Caco-2 (cell line): ENCODE measurements at regions of chr15 and their contacts with region 1.

Region 1: GRCh38 chr15:32743411-32744140 is 25.8 kb downstream of the GREM1 start:
- DNase-seq: no peak
- H3K4me3 ChIP-seq: no peak overlapping the region
- H3K4me3 Mint-ChIP-seq: no peak overlapping the region
- H3K27ac Mint-ChIP-seq: no peak overlapping the region
- H3K4me1 ChIP-seq: no peaks in the 10 kb centered on the region
- H3K4me1 Mint-ChIP-seq: no peaks in the 10 kb centered on the region
- H3K27me3 ChIP-seq: no peaks in the 10 kb centered on the region
- H3K27me3 Mint-ChIP-seq: peaks cover 3% of the 10 kb centered on the region
- CTCF ChIP-seq: no peak

Region 2: GRCh38 chr15:32730677-32731654 is 12.6 kb before region 1 on chr15:
- CTCF ChIA-PET with region 1: no interaction called
- POLR2A ChIA-PET with region 1: no interaction called
- intact Hi-C with region 1: no loop called
- DNase-seq: no peak
- H3K4me3 ChIP-seq: no peak overlapping the region
- H3K4me3 Mint-ChIP-seq: no peak overlapping the region
- H3K27ac Mint-ChIP-seq: no peak overlapping the region
- H3K4me1 ChIP-seq: no peaks in the 10 kb centered on the region
- H3K4me1 Mint-ChIP-seq: no peaks in the 10 kb centered on the region
- H3K27me3 ChIP-seq: no peaks in the 10 kb centered on the region
- H3K27me3 Mint-ChIP-seq: peaks cover 7% of the 10 kb centered on the region
- CTCF ChIP-seq: no peak

Region 3: GRCh38 chr15:32802286-32802936 is 58.8 kb after region 1 on chr15:
- CTCF ChIA-PET with region 1: no interaction called
- POLR2A ChIA-PET with region 1: no interaction called
- intact Hi-C with region 1: loop called (anchors 10 kb)
- DNase-seq: no peak
- H3K4me3 ChIP-seq: no peak overlapping the region
- H3K4me3 Mint-ChIP-seq: no peak overlapping the region
- H3K27ac Mint-ChIP-seq: no peak overlapping the region
- H3K4me1 ChIP-seq: no peaks in the 10 kb centered on the region
- H3K4me1 Mint-ChIP-seq: no peaks in the 10 kb centered on the region
- H3K27me3 ChIP-seq: no peaks in the 10 kb centered on the region
- H3K27me3 Mint-ChIP-seq: no peaks in the 10 kb centered on the region
- CTCF ChIP-seq: no peak

Region 4: GRCh38 chr15:32979710-32980109 is 236.1 kb after region 1 on chr15:
- CTCF ChIA-PET with region 1: no interaction called
- POLR2A ChIA-PET with region 1: no interaction called
- intact Hi-C with region 1: no loop called
- DNase-seq: no peak
- H3K4me3 ChIP-seq: no peak overlapping the region
- H3K4me3 Mint-ChIP-seq: no peak overlapping the region
- H3K27ac Mint-ChIP-seq: no peak overlapping the region
- H3K4me1 ChIP-seq: no peaks in the 10 kb centered on the region
- H3K4me1 Mint-ChIP-seq: no peaks in the 10 kb centered on the region
- H3K27me3 ChIP-seq: no peaks in the 10 kb centered on the region
- H3K27me3 Mint-ChIP-seq: peaks cover 9% of the 10 kb centered on the region
- CTCF ChIP-seq: no peak